Ascending aorta (tissue), 2 donors: ENCODE measurements at regions of chr17 and their contacts with region 1.

Region 1: GRCh38 chr17:65785109-65785508 is 223.7 kb upstream of the AXIN2 start:
- DNase-seq: no peak
- H3K4me3 ChIP-seq: no peak overlapping the region
- H3K27ac ChIP-seq: peak overlapping the region; percentile 52 to 61
- H3K4me1 ChIP-seq: peaks cover 6 to 15% of the 10 kb centered on the region in 2 donors
- H3K27me3 ChIP-seq: no peaks in the 10 kb centered on the region
- CTCF ChIP-seq: no peak

Region 2: DNA sequence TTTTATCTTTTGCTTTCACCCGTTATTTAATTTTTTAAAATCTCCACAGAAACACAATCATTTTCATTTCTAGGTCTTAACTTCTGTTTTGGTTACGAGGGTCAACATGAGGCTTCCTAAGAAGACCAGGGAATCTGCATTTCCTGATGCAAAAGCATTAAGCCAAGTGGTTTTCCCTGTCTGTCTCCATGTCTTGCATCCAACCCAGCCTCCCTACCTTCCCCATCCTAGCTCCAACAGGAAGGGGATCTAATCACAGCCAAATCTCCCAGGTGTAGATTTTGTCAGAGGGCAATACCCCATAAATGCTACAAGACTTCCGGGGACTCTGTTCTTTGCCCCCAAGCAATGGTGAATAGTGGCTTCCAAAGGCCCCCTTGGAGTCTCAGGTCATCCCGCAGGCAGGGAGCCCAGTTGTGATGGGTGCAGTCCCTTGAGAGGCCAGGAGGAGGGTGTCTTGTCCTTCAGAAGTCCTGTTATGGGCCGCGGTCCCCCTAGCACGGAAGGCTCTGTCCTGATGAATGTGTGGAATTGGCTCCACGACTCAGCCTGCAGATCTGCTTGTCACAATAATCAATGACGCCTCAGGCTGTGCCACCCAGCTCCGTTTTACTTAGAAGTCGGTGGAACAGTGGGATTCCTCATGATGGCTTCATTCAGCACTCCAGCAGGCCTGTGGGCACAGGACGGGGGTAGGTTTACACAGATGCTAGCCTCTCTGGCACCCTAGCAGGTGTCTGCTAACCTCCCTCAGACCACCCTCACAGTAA is 506.9 kb before region 1 on chr17:
- intact Hi-C with region 1: loop called (anchors 10 kb)
- DNase-seq: peak in 1 of 2 donors; percentile 63
- H3K4me3 ChIP-seq: peak overlapping the region in 1 of 2 donors; percentile 40
- H3K27ac ChIP-seq: peak overlapping the region in 1 of 2 donors; percentile 61
- H3K4me1 ChIP-seq: peaks cover 0 to 7% of the 10 kb centered on the region in 2 donors
- H3K27me3 ChIP-seq: no peaks in the 10 kb centered on the region
- CTCF ChIP-seq: peak in 1 of 3 experiments; percentile 34

Region 3: GRCh38 chr17:65841089-65841488 is 56.0 kb after region 1 on chr17:
- intact Hi-C with region 1: no loop called
- DNase-seq: no peak
- H3K4me3 ChIP-seq: no peak overlapping the region
- H3K27ac ChIP-seq: no peak overlapping the region
- H3K4me1 ChIP-seq: no peaks in the 10 kb centered on the region
- H3K27me3 ChIP-seq: no peaks in the 10 kb centered on the region
- CTCF ChIP-seq: no peak

Region 4: GRCh38 chr17:65865715-65866425 is 80.8 kb after region 1 on chr17:
- intact Hi-C with region 1: no loop called
- DNase-seq: no peak
- H3K4me3 ChIP-seq: no peak overlapping the region
- H3K27ac ChIP-seq: no peak overlapping the region
- H3K4me1 ChIP-seq: no peaks in the 10 kb centered on the region
- H3K27me3 ChIP-seq: no peaks in the 10 kb centered on the region
- CTCF ChIP-seq: no peak

Region 5: GRCh38 chr17:65990593-65990992 is 205.5 kb after region 1 on chr17:
- intact Hi-C with region 1: no loop called
- DNase-seq: no peak
- H3K4me3 ChIP-seq: no peak overlapping the region
- H3K27ac ChIP-seq: no peak overlapping the region
- H3K4me1 ChIP-seq: no peaks in the 10 kb centered on the region
- H3K27me3 ChIP-seq: no peaks in the 10 kb centered on the region
- CTCF ChIP-seq: no peak